Mammary epithelial cell (primary cell): ENCODE measurements at regions of chr14 and their contacts with region 1.

Region 1: DNA sequence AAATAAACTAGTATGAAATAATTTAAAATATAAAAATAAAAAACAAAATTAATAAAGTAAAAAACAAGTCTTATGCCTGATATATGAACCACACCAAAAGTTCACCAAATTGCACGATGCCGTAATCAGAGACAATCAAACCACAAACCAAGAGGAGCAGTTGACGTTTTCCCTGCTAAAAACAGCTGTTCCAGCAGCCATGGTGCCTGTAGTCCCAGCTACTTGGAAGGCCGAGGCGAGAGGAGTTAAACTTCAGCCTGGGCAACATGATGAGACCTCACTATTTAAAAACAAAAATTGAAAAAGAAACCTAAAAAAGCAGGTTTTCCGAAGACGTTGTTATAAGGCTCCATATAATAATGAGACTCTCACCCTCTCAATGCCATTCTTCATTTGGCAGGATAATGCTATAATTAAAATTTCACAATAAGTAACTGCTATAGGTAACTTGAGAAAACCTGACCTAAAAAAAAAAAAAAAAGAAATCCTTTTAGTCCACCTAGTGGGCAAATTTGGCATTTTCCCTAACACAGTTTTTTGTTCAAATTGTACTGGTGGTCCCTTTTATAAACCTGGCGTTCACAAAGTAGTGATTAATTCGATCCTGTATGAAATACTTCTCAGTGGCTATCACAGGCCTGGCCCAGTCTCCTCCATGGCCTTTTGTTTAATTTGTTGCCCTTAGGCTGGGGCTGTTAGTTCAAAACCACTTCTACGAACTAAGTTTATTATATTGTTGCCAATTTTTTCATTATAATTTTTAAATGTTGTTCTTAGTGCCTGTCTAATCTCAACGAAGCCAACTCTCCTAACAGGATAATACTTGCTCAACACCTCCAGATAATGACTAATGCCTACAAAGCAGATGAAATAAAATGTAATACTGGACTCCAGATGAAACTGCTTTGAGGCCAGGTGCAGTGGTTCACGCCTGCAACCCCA is 62.1 kb downstream of the TNFAIP2 start:
- DNase-seq: peak; percentile 82
- H3K4me3 ChIP-seq: no peak overlapping the region
- H3K27ac ChIP-seq: peak overlapping the region; percentile 36
- H3K4me1 ChIP-seq: peaks cover 11% of the 10 kb centered on the region
- H3K27me3 ChIP-seq: peaks cover 3% of the 10 kb centered on the region
- CTCF ChIP-seq: peak; percentile 54 to 63

Region 2: DNA sequence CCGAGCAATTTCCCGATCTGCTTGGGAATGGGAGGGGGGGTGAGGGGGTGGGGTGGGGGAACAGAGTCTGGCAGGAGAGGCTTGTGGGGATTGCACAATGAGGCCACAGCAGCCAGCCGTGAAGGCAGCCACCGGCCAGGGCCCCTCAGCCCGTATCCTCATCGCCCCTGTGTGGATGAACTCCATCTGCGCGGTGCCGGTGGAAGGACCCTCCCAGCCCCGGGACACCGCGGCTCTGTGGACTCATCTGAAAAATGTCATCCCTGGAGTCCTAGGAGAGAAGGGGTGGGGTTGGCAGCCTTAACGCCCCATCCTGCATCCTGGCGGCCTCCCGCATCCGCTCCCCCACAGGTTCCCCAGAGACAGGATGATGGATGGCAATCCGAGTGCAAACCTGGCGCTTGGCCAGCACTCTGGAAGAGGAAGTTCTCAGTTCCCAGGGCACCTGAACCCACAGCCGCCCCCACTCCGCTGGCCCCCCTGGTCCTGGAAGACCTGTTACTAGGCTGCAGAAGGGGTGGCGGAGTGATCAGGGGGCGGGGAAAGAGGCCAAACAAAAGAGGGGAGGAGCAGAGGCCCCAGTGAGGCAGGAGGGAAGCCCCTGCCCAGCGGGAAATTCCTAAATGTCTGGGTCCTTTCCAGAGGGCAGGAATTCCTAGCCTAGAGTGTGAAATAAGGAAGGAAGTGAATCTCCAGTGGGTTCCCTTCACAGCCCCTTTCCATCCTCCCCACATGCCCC is 63.3 kb before region 1 on chr14:
- CTCF ChIA-PET with region 1: no interaction called
- dilution Hi-C with region 1: no loop called
- in situ Hi-C with region 1: no loop called
- intact Hi-C with region 1: loop called (anchors 1 kb)
- DNase-seq: no peak
- H3K4me3 ChIP-seq: no peak overlapping the region
- H3K27ac ChIP-seq: no peak overlapping the region
- H3K4me1 ChIP-seq: peaks cover 5% of the 10 kb centered on the region
- H3K27me3 ChIP-seq: peaks cover 2% of the 10 kb centered on the region
- CTCF ChIP-seq: no peak

Region 3: DNA sequence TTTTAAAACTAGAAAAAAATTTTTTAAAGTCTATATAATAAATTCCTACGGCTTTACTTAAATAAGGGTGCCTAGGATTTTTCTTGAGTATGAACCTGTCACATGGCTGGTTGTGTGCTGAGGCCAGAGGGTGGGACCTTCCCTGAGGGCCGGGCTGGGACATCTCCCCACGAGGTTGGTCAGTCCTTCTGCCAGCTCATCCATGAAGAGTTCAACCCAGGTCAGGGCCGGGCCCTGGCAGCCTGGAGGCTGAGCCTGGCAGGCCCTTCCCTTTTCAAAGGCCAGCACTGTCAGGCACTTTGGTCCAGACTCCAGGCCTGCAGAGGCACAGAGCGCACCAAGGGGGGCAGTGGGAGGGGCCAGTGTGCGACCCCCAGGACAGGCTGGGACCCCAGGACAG is 30.3 kb before region 1 on chr14:
- CTCF ChIA-PET with region 1: no interaction called
- dilution Hi-C with region 1: no loop called
- in situ Hi-C with region 1: no loop called
- intact Hi-C with region 1: loop called (anchors 5 kb)
- DNase-seq: peak; percentile 58
- H3K4me3 ChIP-seq: no peak overlapping the region
- H3K27ac ChIP-seq: no peak overlapping the region
- H3K4me1 ChIP-seq: peaks cover 13% of the 10 kb centered on the region
- H3K27me3 ChIP-seq: no peaks in the 10 kb centered on the region
- CTCF ChIP-seq: no peak

Region 4: DNA sequence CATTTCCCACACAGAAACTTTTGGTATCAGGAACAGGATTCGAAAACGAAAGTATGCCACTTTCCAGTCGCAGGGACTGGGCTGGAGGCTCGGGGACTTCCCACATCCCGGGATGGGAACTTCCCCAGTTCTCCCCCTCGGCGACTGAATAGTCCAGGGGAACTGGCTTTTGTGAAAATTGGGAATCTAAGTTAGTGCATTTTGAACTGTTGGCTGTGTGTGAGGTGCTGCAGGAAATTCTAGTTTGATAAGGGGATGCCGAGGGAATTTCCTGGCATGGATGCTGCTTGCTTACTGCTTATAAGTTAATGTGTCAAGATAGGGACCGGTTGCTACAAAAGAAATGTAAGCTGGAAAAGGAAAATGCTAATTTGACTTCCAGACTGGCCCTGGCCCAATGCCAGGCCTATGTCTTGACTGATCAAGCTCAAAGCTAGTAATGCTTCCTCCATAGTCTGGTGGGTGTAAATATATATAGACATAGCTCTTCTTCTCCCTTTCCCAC is 75.3 kb after region 1 on chr14:
- CTCF ChIA-PET with region 1: no interaction called
- dilution Hi-C with region 1: no loop called
- in situ Hi-C with region 1: no loop called
- intact Hi-C with region 1: loop called (anchors 1 kb)
- DNase-seq: peak; percentile 92
- H3K4me3 ChIP-seq: peak overlapping the region; percentile 39 to 65 (median 59)
- H3K27ac ChIP-seq: peak overlapping the region; percentile 77
- H3K4me1 ChIP-seq: peaks cover 6% of the 10 kb centered on the region
- H3K27me3 ChIP-seq: no peaks in the 10 kb centered on the region
- CTCF ChIP-seq: no peak